GM10248 (cell line): ENCODE measurements at regions of chr1 and their contacts with region 1.

Region 1: GRCh38 chr1:61254634-61255357 is 172.4 kb downstream of the NFIA start:
- DNase-seq: no peak
- CTCF ChIP-seq: no peak

Region 2: DNA sequence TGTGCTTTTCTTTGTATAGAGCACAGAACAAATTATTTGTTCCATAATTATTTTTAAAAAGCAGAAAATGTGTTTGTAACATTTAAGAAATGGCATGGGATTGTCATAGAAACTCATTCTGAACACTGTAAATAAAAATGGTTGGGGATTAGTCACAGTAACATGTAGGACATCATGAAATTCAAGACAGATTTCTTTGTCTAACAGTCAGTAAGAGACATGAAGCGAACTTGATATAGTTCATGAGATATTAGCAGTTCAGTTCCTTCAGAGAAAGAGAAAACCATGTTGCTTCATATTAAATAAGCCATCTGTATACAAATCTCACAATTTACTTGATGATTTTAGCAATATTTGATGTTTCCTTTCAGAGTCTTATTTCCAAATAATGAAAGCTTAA is 152.8 kb before region 1 on chr1:
- CTCF ChIA-PET with region 1: no interaction called
- POLR2A ChIA-PET with region 1: no interaction called
- DNase-seq: no peak
- CTCF ChIP-seq: no peak

Region 3: DNA sequence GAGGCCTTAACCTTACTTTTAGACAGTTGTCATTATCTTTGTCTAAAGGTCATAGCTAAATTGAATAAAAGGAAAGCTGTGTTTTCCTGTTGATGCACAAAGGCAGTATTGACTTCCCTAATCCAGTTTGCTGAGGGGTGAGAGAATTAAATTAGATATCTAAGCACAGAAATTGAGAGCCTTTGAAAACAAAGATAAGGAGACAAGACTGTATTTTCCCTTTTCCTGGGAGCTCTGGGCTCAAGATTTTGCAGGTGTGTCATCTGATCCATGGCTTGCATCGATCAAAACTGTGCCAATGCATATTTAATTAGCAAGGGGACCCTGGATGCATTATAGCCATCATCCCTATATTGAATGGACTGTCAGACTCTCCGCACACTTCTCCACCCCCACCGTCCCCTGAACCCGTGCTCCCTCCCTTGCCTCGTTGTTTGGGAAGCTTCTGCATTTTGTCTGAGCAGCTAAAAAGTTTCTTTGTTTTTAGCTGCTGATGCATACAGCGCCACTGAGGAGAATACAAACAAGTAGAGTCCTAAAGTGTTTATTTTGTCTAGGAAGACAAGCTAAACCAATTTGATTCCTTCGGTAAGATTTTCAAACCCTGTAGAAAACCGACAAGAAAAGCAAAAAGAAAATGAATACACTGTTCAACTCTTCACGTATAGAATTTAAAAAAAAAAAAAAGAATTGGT is 13.9 kb after region 1 on chr1:
- CTCF ChIA-PET with region 1: interaction called, 16 read pairs
- POLR2A ChIA-PET with region 1: no interaction called
- DNase-seq: no peak
- CTCF ChIP-seq: no peak

Region 4: DNA sequence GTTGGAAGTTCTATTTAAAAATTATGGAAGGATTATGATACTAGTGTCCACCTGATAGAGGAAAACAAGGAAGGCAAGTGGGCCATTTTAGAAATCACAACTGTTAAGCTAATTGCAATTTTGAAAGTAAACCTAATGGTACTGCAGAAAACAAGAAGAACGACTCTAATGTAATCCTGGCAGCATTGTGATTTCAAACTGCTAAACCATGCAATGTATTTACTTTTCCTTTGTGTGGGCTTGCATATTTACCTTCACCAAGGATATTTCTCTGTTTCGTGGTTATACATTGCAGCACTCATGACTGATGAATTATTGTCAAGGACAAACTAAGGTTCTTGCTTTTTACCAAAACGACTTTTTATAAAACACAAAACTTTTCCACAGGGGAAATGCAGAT is 382.0 kb after region 1 on chr1:
- CTCF ChIA-PET with region 1: no interaction called
- POLR2A ChIA-PET with region 1: no interaction called
- DNase-seq: no peak
- CTCF ChIP-seq: no peak